A673 (cell line): ENCODE measurements at regions of chr13 and their contacts with region 1.

Region 1: GRCh38 chr13:113554333-113554700 is 30.2 kb upstream of the TFDP1 start:
- DNase-seq: no peak
- H3K4me3 ChIP-seq: no peak overlapping the region
- H3K27ac ChIP-seq: no peak overlapping the region
- H3K4me1 ChIP-seq: no peaks in the 10 kb centered on the region
- H3K27me3 ChIP-seq: no peaks in the 10 kb centered on the region
- CTCF ChIP-seq: no peak

Region 2: GRCh38 chr13:113425931-113426590 is 128.3 kb before region 1 on chr13:
- CTCF ChIA-PET with region 1: no interaction called
- POLR2A ChIA-PET with region 1: no interaction called
- intact Hi-C with region 1: no loop called
- DNase-seq: no peak
- H3K4me3 ChIP-seq: no peak overlapping the region
- H3K27ac ChIP-seq: no peak overlapping the region
- H3K4me1 ChIP-seq: no peaks in the 10 kb centered on the region
- H3K27me3 ChIP-seq: no peaks in the 10 kb centered on the region
- CTCF ChIP-seq: no peak

Region 3: GRCh38 chr13:113474179-113474578 is 80.1 kb before region 1 on chr13:
- CTCF ChIA-PET with region 1: no interaction called
- POLR2A ChIA-PET with region 1: no interaction called
- intact Hi-C with region 1: no loop called
- DNase-seq: peak; percentile 28
- H3K4me3 ChIP-seq: no peak overlapping the region
- H3K27ac ChIP-seq: peak overlapping the region; percentile 37
- H3K4me1 ChIP-seq: no peaks in the 10 kb centered on the region
- H3K27me3 ChIP-seq: no peaks in the 10 kb centered on the region
- CTCF ChIP-seq: no peak

Region 4: GRCh38 chr13:113506025-113506685 is 48.2 kb before region 1 on chr13:
- CTCF ChIA-PET with region 1: interaction called, 17 read pairs
- POLR2A ChIA-PET with region 1: no interaction called
- intact Hi-C with region 1: no loop called
- DNase-seq: peak; percentile 5
- H3K4me3 ChIP-seq: no peak overlapping the region
- H3K27ac ChIP-seq: peak overlapping the region; percentile 7
- H3K4me1 ChIP-seq: no peaks in the 10 kb centered on the region
- H3K27me3 ChIP-seq: no peaks in the 10 kb centered on the region
- CTCF ChIP-seq: no peak